B cell (primary cell): ENCODE measurements at regions of chr6 and their contacts with region 1.

Region 1: DNA sequence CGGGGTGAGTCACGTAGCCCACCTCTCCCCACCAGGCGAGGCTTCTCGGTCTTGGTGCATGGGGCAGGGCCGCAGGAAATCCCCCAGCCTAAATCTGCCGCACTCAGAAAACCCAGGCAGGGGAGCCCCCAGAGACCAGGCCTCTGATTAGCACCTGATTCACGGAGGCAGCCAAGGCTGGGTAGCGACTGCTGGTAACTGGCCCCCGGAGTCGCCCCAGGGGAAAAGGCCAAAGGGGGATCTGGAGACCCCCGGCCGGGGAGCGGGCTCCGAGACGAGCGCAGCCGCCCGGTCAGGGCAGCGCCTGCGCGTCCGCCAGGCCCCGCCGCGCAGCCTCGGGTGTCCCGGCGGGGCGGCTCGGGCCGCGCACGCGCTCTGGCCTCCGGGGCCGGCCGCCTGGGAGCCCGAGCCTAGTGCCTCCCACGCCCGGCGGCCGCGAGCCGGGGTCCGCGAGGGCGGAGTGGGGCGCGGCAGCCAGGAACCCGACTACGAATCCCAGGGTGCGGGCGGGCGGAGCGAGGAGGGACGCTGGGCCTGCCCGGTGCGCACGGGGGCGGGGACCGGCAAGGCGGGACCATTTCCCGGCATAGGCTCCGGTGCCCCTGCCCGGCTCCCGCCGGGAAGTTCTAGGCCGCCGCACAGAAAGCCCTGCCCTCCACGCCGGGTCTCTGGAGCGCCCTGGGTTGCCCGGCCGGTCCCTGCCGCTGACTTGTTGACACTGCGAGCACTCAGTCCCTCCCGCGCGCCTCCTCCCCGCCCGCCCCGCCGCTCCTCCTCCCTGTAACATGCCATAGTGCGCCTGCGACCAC is at the start of gene DUSP22:
- DNase-seq: peak; percentile 97
- ATAC-seq: peak; percentile 55
- H3K4me3 ChIP-seq: peak within 1 kb of the TSS; percentile 50 to 87 (median 78)
- H3K4me3 Mint-ChIP-seq: peak within 1 kb of the TSS; percentile 99
- H3K27ac ChIP-seq: peak within 1 kb of the TSS; percentile 93 to 95
- H3K27ac Mint-ChIP-seq: peak within 1 kb of the TSS; percentile 96
- H3K4me1 ChIP-seq: peaks cover 81 to 90% of the 10 kb centered on the region in 2 donors
- H3K4me1 Mint-ChIP-seq: peaks cover 58% of the 10 kb centered on the region
- H3K27me3 ChIP-seq: no peaks in the 10 kb centered on the region
- H3K27me3 Mint-ChIP-seq: no peaks in the 10 kb centered on the region
- CTCF ChIP-seq: no peak
- total RNA-seq, gene DUSP22: 133 and 134 TPM in 2 replicates

Region 2: DNA sequence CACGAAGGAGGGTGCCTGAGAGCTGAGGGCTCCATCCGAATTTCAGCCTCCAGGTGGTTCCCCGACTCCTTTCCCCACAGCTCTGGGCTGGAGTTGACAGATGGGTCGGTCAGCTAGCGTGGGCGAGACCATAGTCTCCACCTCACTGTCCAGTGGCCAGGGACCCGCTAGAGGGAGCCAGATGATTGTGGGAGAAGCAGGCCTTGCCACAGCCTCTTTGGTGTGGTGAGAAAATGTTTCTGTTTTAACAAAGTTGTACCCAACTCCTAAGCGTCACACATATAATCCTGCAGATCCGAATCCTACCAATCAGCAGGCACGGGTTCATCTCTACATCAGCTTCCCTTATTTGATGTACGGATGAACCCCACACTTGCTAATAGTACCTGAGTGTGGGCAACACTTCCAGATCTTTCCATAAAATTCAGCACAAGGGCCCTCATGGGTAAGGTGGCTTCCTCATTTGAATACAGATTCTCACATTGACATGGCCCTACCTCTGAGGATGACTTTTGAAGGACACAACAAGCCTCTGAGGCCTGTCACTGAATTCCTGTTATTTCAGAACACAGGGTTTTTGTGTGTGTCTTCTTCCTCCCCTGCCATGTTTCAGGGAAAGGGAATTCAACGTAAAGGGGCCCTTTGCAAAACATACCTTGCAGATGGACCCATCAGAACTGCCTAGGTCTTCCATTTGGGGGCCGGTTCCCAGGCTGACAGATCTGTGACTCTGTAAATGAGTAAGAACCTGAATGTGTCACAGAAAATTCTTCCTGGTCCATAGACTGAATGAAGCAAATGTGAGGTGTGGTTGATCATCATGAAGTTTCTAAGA is 102.9 kb before region 1 on chr6:
- CTCF ChIA-PET with region 1: interaction called, 8 read pairs
- POLR2A ChIA-PET with region 1: interaction called, 3 read pairs
- intact Hi-C with region 1: loop called (anchors 2 kb)
- DNase-seq: peak; percentile 81
- ATAC-seq: peak; percentile 68
- H3K4me3 ChIP-seq: no peak overlapping the region
- H3K4me3 Mint-ChIP-seq: no peak overlapping the region
- H3K27ac ChIP-seq: no peak overlapping the region
- H3K27ac Mint-ChIP-seq: peak overlapping the region; percentile 10
- H3K4me1 ChIP-seq: peaks cover 62 to 80% of the 10 kb centered on the region in 2 donors
- H3K4me1 Mint-ChIP-seq: peaks cover 75% of the 10 kb centered on the region
- H3K27me3 ChIP-seq: no peaks in the 10 kb centered on the region
- H3K27me3 Mint-ChIP-seq: no peaks in the 10 kb centered on the region
- CTCF ChIP-seq: peak; percentile 82

Region 3: GRCh38 chr6:235763-236360 is 56.0 kb before region 1 on chr6:
- CTCF ChIA-PET with region 1: interaction called, 3 read pairs
- POLR2A ChIA-PET with region 1: no interaction called
- intact Hi-C with region 1: loop called (anchors 1 kb)
- DNase-seq: peak; percentile 73
- ATAC-seq: peak; percentile 85
- H3K4me3 ChIP-seq: peak overlapping the region in 3 of 5 experiments; percentile 12 to 39 (median 23)
- H3K4me3 Mint-ChIP-seq: peak overlapping the region; percentile 73
- H3K27ac ChIP-seq: peak overlapping the region; percentile 59 to 84
- H3K27ac Mint-ChIP-seq: peak overlapping the region; percentile 83
- H3K4me1 ChIP-seq: peaks cover 26 to 30% of the 10 kb centered on the region in 2 donors
- H3K4me1 Mint-ChIP-seq: peaks cover 29% of the 10 kb centered on the region
- H3K27me3 ChIP-seq: no peaks in the 10 kb centered on the region
- H3K27me3 Mint-ChIP-seq: no peaks in the 10 kb centered on the region
- CTCF ChIP-seq: no peak

Region 4: DNA sequence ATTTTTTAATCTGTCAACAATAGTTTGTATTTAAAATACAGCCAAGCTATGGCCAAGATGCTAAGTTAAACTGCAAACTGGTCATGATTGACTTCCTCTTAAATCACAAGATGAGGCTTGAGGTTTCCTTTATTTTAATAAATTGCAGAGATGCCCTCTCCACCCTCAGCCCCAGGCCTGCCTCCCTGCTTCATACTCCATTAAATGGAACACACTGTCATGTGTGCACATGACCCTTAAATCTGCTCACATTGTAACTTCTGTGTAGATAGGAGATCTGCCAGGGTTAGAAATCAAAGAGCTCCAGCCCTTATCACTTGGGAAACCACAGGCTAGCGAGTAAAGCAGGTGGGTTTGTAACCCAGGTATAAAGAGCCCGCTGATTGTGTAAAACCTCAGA is 21.2 kb after region 1 on chr6:
- CTCF ChIA-PET with region 1: interaction called, 15 read pairs
- POLR2A ChIA-PET with region 1: interaction called, 20 read pairs
- intact Hi-C with region 1: no loop called
- DNase-seq: peak; percentile 88
- ATAC-seq: peak; percentile 83
- H3K4me3 ChIP-seq: peak overlapping the region in 1 of 5 experiments; percentile 20
- H3K4me3 Mint-ChIP-seq: peak overlapping the region; percentile 50
- H3K27ac ChIP-seq: peak overlapping the region; percentile 63 to 85
- H3K27ac Mint-ChIP-seq: peak overlapping the region; percentile 82
- H3K4me1 ChIP-seq: peaks cover 77 to 89% of the 10 kb centered on the region in 2 donors
- H3K4me1 Mint-ChIP-seq: peaks cover 94% of the 10 kb centered on the region
- H3K27me3 ChIP-seq: no peaks in the 10 kb centered on the region
- H3K27me3 Mint-ChIP-seq: no peaks in the 10 kb centered on the region
- CTCF ChIP-seq: no peak

Region 5: DNA sequence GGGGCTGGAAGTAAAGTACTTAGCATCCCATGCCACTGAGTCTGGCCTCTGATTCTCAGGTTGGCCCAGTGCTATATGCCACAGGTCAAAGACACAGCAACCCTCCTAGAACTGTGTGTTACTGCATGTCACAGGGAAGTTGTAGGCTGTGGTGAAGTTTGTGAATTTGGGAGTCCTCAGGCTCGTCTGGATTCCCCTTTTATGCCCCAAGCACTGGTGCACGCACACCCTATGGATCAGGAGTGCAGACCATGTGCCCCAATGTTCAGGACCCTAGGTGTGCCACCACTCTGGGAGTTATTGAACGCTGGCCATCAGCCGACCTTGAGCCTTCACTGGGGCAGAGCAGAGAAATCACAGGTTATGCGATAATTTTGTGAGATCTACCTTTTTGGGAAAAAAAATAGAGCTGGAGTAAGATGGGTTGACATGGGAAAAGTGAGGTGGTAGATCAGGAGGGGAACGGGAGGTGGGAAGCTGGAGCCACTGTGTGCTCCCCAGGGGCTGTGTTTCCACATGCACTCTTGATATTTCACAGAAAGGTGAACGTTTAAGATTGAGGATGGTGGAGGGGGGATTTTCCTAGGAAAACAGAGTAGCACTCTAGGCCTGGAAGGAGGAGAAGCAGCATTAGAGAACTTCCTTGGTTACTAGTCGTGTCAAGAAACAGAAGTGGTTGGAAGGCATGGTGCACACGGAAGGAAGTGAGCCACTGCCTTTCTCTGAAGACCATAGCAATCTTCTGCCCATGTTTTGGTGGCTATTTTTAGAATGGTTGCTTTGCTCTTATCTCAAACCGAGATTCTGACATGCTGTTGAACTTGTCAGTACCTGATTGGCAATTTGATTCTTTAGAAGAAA is 44.5 kb after region 1 on chr6:
- CTCF ChIA-PET with region 1: interaction called, 9 read pairs
- POLR2A ChIA-PET with region 1: interaction called, 11 read pairs
- intact Hi-C with region 1: loop called (anchors 2 kb)
- DNase-seq: peak; percentile 80
- ATAC-seq: peak; percentile 58
- H3K4me3 ChIP-seq: peak overlapping the region in 3 of 5 experiments; percentile 10 to 47 (median 19)
- H3K4me3 Mint-ChIP-seq: peak overlapping the region; percentile 76
- H3K27ac ChIP-seq: peak overlapping the region; percentile 79 to 84
- H3K27ac Mint-ChIP-seq: peak overlapping the region; percentile 90
- H3K4me1 ChIP-seq: peaks cover 85 to 94% of the 10 kb centered on the region in 2 donors
- H3K4me1 Mint-ChIP-seq: peaks cover 59% of the 10 kb centered on the region
- H3K27me3 ChIP-seq: no peaks in the 10 kb centered on the region
- H3K27me3 Mint-ChIP-seq: no peaks in the 10 kb centered on the region
- CTCF ChIP-seq: no peak

Region 6: DNA sequence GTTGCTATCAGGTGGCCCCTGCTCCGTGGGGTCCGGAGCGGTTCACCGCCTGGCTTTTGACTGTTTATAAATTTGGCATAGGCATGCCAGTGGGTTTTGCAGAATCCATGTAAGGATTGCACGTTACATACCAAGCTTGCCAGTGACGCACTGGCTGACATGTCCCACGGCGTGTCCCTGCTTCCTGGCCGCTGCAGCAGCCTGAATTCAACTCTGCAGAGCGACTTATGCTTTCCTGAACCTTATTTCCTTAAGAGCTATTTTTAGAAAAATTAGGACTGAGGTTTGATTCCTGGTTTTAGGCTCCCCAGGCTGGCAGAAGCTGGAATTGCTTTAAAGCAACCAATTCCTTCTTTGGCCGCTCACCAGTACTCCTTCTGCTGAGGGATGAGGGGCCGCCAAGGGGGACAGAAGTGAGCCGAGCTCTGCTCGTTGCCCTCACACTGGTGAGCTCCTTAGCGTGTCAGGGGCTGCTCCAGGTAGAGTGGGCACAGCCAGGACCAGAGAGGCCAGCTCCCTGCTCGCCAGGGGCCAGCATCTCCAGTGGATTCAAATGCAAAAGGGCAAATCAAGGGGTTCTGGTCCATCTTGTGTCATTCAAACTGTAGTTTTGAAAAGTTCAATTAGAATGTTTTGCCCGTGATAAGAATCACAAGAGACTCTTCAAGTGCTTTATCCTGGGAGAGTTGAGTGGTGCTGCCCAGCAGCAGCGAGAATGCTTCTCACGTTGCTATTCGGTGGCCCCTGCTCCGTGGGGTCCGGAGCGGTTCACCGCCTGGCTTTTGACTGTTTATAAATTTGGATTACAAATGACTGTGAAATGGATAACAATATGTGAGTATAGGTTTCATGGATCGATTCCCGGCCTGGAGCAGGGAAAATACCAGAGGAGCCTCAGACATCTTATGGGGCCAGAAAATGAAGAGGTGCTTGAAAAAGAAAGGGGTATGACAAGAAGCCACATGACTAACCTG is 82.1 kb after region 1 on chr6:
- CTCF ChIA-PET with region 1: no interaction called
- POLR2A ChIA-PET with region 1: no interaction called
- intact Hi-C with region 1: no loop called
- DNase-seq: no peak
- ATAC-seq: no peak
- H3K4me3 ChIP-seq: no peak overlapping the region
- H3K4me3 Mint-ChIP-seq: no peak overlapping the region
- H3K27ac ChIP-seq: no peak overlapping the region
- H3K27ac Mint-ChIP-seq: no peak overlapping the region
- H3K4me1 ChIP-seq: peaks cover 43 to 46% of the 10 kb centered on the region in 2 donors
- H3K4me1 Mint-ChIP-seq: peaks cover 43% of the 10 kb centered on the region
- H3K27me3 ChIP-seq: peaks cover 0 to 2% (median 0%) of the 10 kb centered on the region in 4 experiments
- H3K27me3 Mint-ChIP-seq: peaks cover 13% of the 10 kb centered on the region
- CTCF ChIP-seq: no peak

Region 7: GRCh38 chr6:408599-409102 is 116.8 kb after region 1 on chr6:
- CTCF ChIA-PET with region 1: interaction called, 4 read pairs
- POLR2A ChIA-PET with region 1: interaction called, 11 read pairs
- intact Hi-C with region 1: no loop called
- DNase-seq: peak; percentile 60
- ATAC-seq: no peak
- H3K4me3 ChIP-seq: no peak overlapping the region
- H3K4me3 Mint-ChIP-seq: no peak overlapping the region
- H3K27ac ChIP-seq: peak overlapping the region in 1 of 2 donors; percentile 89
- H3K27ac Mint-ChIP-seq: peak overlapping the region; percentile 81
- H3K4me1 ChIP-seq: peaks cover 17 to 19% of the 10 kb centered on the region in 2 donors
- H3K4me1 Mint-ChIP-seq: peaks cover 44% of the 10 kb centered on the region
- H3K27me3 ChIP-seq: no peaks in the 10 kb centered on the region
- H3K27me3 Mint-ChIP-seq: no peaks in the 10 kb centered on the region
- CTCF ChIP-seq: peak; percentile 74

Region 8: GRCh38 chr6:422433-423054 is 130.6 kb after region 1 on chr6:
- CTCF ChIA-PET with region 1: no interaction called
- POLR2A ChIA-PET with region 1: no interaction called
- intact Hi-C with region 1: no loop called
- DNase-seq: no peak
- ATAC-seq: peak; percentile 90
- H3K4me3 ChIP-seq: no peak overlapping the region
- H3K4me3 Mint-ChIP-seq: no peak overlapping the region
- H3K27ac ChIP-seq: no peak overlapping the region
- H3K27ac Mint-ChIP-seq: peak overlapping the region; percentile 50
- H3K4me1 ChIP-seq: peaks cover 0 to 3% of the 10 kb centered on the region in 2 donors
- H3K4me1 Mint-ChIP-seq: peaks cover 9% of the 10 kb centered on the region
- H3K27me3 ChIP-seq: no peaks in the 10 kb centered on the region
- H3K27me3 Mint-ChIP-seq: no peaks in the 10 kb centered on the region
- CTCF ChIP-seq: no peak